CD4-positive, alpha-beta memory T cell (primary cell): ENCODE measurements at regions of chr13 and their contacts with region 1.

Region 1: DNA sequence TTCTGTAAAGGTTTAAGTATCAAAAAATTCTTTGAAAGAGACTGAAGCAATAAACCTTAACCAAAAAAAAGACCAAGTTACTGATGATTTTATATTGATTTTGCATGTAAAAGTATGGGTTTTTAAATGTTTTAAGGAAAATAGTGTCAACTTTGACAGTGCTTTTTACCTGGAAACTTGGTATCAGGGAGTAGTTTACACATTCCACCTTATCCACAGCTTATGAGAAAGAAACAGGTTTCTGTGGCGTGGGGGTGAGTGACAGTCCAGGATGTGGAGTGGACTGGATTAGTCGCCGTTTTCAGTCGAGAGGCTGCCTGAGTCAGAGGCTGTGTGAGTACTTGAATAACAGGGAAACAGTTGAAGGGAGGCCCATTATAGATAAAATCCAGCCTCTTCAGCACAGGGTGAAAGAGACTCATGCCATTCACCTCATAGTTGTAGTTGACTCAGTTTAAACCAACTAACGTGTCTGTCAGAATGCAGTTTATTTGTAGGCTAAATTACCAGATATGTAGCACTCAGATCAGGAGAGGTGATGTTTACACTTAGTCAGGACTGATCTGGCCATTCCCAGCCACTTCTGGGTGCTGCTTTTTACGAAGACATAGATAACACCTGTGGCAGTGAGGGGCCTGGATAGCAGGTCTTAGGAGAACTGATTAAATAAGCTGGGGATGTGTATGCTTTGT is 595 bp upstream of the GPR183 start:
- DNase-seq: peak in 2 of 5 donors; percentile 49 to 83
- H3K4me3 ChIP-seq: peak overlapping the region; percentile 47 to 78
- H3K4me3 Mint-ChIP-seq: peak overlapping the region; percentile 88 to 100 (median 99)
- H3K27ac ChIP-seq: peak overlapping the region; percentile 77
- H3K27ac Mint-ChIP-seq: peak overlapping the region; percentile 88 to 99 (median 96)
- H3K4me1 ChIP-seq: peaks cover 71% of the 10 kb centered on the region
- H3K4me1 Mint-ChIP-seq: peaks cover 48 to 82% (median 58%) of the 10 kb centered on the region in 4 donors
- H3K27me3 ChIP-seq: no peaks in the 10 kb centered on the region
- H3K27me3 Mint-ChIP-seq: no peaks in the 10 kb centered on the region

Region 2: GRCh38 chr13:99200432-99201167 is 107.2 kb before region 1 on chr13 and contains the start of gene UBAC2:
- CTCF ChIA-PET with region 1: interaction called, 3 read pairs
- POLR2A ChIA-PET with region 1: interaction called, 19 read pairs
- intact Hi-C with region 1: loop called (anchors 5 kb)
- DNase-seq: peak; percentile 95 to 99 (median 98)
- H3K4me3 ChIP-seq: peak within 1 kb of the TSS; percentile 79 to 89
- H3K4me3 Mint-ChIP-seq: peak within 1 kb of the TSS; percentile 93 to 100 (median 99)
- H3K27ac ChIP-seq: peak within 1 kb of the TSS; percentile 97
- H3K27ac Mint-ChIP-seq: peak within 1 kb of the TSS; percentile 85 to 98 (median 97)
- H3K4me1 ChIP-seq: peaks cover 61% of the 10 kb centered on the region
- H3K4me1 Mint-ChIP-seq: peaks cover 45 to 69% (median 55%) of the 10 kb centered on the region in 4 donors
- H3K27me3 ChIP-seq: no peaks in the 10 kb centered on the region
- H3K27me3 Mint-ChIP-seq: no peaks in the 10 kb centered on the region
- total RNA-seq, gene UBAC2: 88.4 to 89.0 TPM

Region 3: GRCh38 chr13:99296398-99296797 is 11.4 kb before region 1 on chr13:
- CTCF ChIA-PET with region 1: interaction called, 10 read pairs
- POLR2A ChIA-PET with region 1: interaction called, 247 read pairs
- intact Hi-C with region 1: loop called (anchors 1 kb)
- DNase-seq: peak; percentile 46 to 69 (median 59)
- H3K4me3 ChIP-seq: peak overlapping the region in 1 of 2 donors; percentile 8
- H3K4me3 Mint-ChIP-seq: peak overlapping the region; percentile 76 to 87 (median 86)
- H3K27ac ChIP-seq: peak overlapping the region; percentile 66
- H3K27ac Mint-ChIP-seq: peak overlapping the region; percentile 86 to 96 (median 94)
- H3K4me1 ChIP-seq: peaks cover 94% of the 10 kb centered on the region
- H3K4me1 Mint-ChIP-seq: peaks cover 58 to 92% (median 70%) of the 10 kb centered on the region in 4 donors
- H3K27me3 ChIP-seq: no peaks in the 10 kb centered on the region
- H3K27me3 Mint-ChIP-seq: no peaks in the 10 kb centered on the region

Region 4: GRCh38 chr13:99339736-99340397 is 32.1 kb after region 1 on chr13:
- CTCF ChIA-PET with region 1: interaction called, 3 read pairs
- POLR2A ChIA-PET with region 1: interaction called, 929 read pairs
- intact Hi-C with region 1: no loop called
- DNase-seq: peak; percentile 71 to 86 (median 76)
- H3K4me3 ChIP-seq: peak overlapping the region; percentile 4 to 37
- H3K4me3 Mint-ChIP-seq: peak overlapping the region; percentile 68 to 91 (median 85)
- H3K27ac ChIP-seq: peak overlapping the region; percentile 47
- H3K27ac Mint-ChIP-seq: peak overlapping the region; percentile 76 to 94 (median 91)
- H3K4me1 ChIP-seq: peaks cover 86% of the 10 kb centered on the region
- H3K4me1 Mint-ChIP-seq: peaks cover 71 to 97% (median 83%) of the 10 kb centered on the region in 4 donors
- H3K27me3 ChIP-seq: no peaks in the 10 kb centered on the region
- H3K27me3 Mint-ChIP-seq: no peaks in the 10 kb centered on the region

Region 5: GRCh38 chr13:99366075-99366987 is 58.5 kb after region 1 on chr13:
- CTCF ChIA-PET with region 1: interaction called, 10 read pairs
- POLR2A ChIA-PET with region 1: interaction called, 417 read pairs
- intact Hi-C with region 1: loop called (anchors 2 kb)
- DNase-seq: no peak
- H3K4me3 ChIP-seq: peak overlapping the region in 1 of 2 donors; percentile 22
- H3K4me3 Mint-ChIP-seq: peak overlapping the region; percentile 41 to 93 (median 78)
- H3K27ac ChIP-seq: peak overlapping the region; percentile 70
- H3K27ac Mint-ChIP-seq: peak overlapping the region; percentile 96 to 98 (median 97)
- H3K4me1 ChIP-seq: peaks cover 98% of the 10 kb centered on the region
- H3K4me1 Mint-ChIP-seq: peaks cover 73 to 98% (median 85%) of the 10 kb centered on the region in 4 donors
- H3K27me3 ChIP-seq: no peaks in the 10 kb centered on the region
- H3K27me3 Mint-ChIP-seq: no peaks in the 10 kb centered on the region

Region 6: GRCh38 chr13:99386911-99387788 is 79.4 kb after region 1 on chr13:
- CTCF ChIA-PET with region 1: interaction called, 142 read pairs
- POLR2A ChIA-PET with region 1: interaction called, 350 read pairs
- intact Hi-C with region 1: loop called (anchors 1 kb)
- DNase-seq: peak; percentile 78 to 84 (median 81)
- H3K4me3 ChIP-seq: no peak overlapping the region
- H3K4me3 Mint-ChIP-seq: peak overlapping the region; percentile 4 to 73 (median 54)
- H3K27ac ChIP-seq: peak overlapping the region; percentile 30
- H3K27ac Mint-ChIP-seq: peak overlapping the region; percentile 92 to 99 (median 96)
- H3K4me1 ChIP-seq: peaks cover 65% of the 10 kb centered on the region
- H3K4me1 Mint-ChIP-seq: peaks cover 46 to 70% (median 60%) of the 10 kb centered on the region in 4 donors
- H3K27me3 ChIP-seq: no peaks in the 10 kb centered on the region
- H3K27me3 Mint-ChIP-seq: no peaks in the 10 kb centered on the region

Region 7: DNA sequence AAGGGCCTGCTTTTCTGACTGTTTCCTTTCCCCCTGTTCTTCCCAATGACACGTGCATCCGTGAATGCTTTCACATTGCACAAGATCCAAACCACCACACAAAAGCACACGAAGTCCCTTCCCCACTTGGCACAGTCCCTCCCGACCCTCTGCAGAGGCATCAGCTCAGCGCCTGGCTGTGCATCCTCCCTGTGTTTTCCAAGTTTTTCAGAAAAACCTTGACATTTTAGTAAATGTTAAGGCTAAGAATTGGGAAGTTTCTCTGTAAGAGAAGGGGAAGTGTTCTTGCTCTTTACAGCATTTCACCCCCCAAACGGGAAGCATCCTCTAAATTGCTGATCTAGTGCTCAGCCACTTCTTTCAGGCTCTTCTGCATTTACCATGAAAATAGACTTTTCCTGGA is 99.0 kb after region 1 on chr13:
- CTCF ChIA-PET with region 1: no interaction called
- POLR2A ChIA-PET with region 1: no interaction called
- intact Hi-C with region 1: no loop called
- DNase-seq: no peak
- H3K4me3 ChIP-seq: no peak overlapping the region
- H3K4me3 Mint-ChIP-seq: no peak overlapping the region
- H3K27ac ChIP-seq: no peak overlapping the region
- H3K27ac Mint-ChIP-seq: no peak overlapping the region
- H3K4me1 ChIP-seq: peaks cover 7% of the 10 kb centered on the region
- H3K4me1 Mint-ChIP-seq: peaks cover 12 to 14% (median 13%) of the 10 kb centered on the region in 4 donors
- H3K27me3 ChIP-seq: no peaks in the 10 kb centered on the region
- H3K27me3 Mint-ChIP-seq: no peaks in the 10 kb centered on the region